IMR-90 (cell line): ENCODE measurements at regions of chr1 and their contacts with region 1.

Region 1: DNA sequence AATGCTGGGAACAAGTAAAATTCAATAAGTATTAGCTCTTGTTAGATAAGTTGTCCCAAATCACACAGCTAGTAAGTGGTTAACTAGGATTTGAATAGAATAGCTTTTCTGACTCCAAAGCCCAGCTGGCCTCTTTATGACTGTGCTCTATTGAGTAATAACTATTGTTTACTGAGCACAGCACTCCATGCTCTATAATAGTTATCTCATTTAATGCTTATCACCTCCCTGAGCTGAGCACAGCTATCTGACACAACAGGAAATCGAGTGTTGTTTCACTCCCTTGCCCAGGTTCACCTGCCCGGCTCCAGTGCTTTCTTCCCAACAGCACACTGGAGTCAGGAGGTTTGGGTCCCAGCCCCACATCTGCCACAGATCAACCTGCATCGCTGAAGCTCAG is 38.8 kb upstream of the STMN1 start:
- DNase-seq: peak; percentile 55
- ATAC-seq: peak; percentile 69
- H3K4me3 ChIP-seq: no peak overlapping the region
- H3K27ac ChIP-seq: no peak overlapping the region
- H3K4me1 ChIP-seq: no peaks in the 10 kb centered on the region; the same call in 1 of the 2 replicates
- H3K27me3 ChIP-seq: no peaks in the 10 kb centered on the region
- CTCF ChIP-seq: no peak
- POLR2A ChIP-seq: no peak
- RAD21 ChIP-seq: no peak

Region 2: GRCh38 chr1:25890239-25891034 is 54.5 kb before region 1 on chr1:
- CTCF ChIA-PET with region 1: interaction called, 3 read pairs
- POLR2A ChIA-PET with region 1: interaction called, 11 read pairs
- dilution Hi-C with region 1: no loop called
- in situ Hi-C with region 1: no loop called
- intact Hi-C with region 1: no loop called
- DNase-seq: peak; percentile 58
- ATAC-seq: no peak
- H3K4me3 ChIP-seq: no peak overlapping the region
- H3K27ac ChIP-seq: peak overlapping the region; percentile 74
- H3K4me1 ChIP-seq: peaks cover 33% of the 10 kb centered on the region
- H3K27me3 ChIP-seq: no peaks in the 10 kb centered on the region
- CTCF ChIP-seq: no peak
- POLR2A ChIP-seq: no peak
- RAD21 ChIP-seq: no peak

Region 3: DNA sequence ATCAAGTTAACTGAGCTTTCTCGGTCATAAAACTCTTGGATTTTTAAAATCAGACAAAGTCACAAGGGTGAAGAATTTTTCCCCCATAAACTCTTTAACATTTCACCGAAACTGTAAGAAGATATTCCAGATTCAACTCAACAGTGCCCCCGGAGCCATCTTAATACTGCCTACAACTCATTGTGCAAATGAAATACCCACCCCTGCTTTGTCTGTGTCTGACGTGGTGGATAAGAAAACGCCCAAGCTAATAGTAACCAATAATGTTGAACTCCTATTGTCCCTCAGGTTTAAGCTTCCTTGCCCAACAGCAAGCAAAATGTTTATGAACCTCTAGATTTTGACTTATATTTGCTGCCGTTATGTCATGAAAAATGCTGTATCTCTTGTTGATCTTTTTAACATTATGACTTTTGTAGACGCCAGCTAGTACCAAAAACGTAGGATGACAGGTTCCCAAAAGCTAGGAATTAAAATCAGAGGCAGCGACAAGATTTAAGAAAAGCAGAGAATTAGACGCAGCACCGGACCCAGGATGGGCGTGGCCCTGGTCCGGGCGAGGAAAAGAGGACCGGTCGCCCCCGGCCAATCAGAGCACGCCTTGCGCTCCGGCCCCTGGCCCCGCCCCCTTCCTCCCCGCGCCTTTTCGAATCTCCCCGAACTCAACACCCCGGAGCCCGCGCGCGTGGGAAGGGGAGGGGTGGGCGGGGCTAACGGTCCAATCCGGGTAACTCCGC is 39.9 kb before region 1 on chr1:
- CTCF ChIA-PET with region 1: no interaction called
- POLR2A ChIA-PET with region 1: interaction called, 17 read pairs
- dilution Hi-C with region 1: no loop called
- in situ Hi-C with region 1: no loop called
- intact Hi-C with region 1: no loop called
- DNase-seq: peak; percentile 88
- ATAC-seq: peak; percentile 92
- H3K4me3 ChIP-seq: peak overlapping the region; percentile 71
- H3K27ac ChIP-seq: peak overlapping the region; percentile 36
- H3K4me1 ChIP-seq: peaks cover 5% of the 10 kb centered on the region
- H3K27me3 ChIP-seq: no peaks in the 10 kb centered on the region
- CTCF ChIP-seq: no peak
- POLR2A ChIP-seq: no peak
- RAD21 ChIP-seq: 0 out of 2 replicates have a peak, but pooled peaks have one; percentile 6

Region 4: DNA sequence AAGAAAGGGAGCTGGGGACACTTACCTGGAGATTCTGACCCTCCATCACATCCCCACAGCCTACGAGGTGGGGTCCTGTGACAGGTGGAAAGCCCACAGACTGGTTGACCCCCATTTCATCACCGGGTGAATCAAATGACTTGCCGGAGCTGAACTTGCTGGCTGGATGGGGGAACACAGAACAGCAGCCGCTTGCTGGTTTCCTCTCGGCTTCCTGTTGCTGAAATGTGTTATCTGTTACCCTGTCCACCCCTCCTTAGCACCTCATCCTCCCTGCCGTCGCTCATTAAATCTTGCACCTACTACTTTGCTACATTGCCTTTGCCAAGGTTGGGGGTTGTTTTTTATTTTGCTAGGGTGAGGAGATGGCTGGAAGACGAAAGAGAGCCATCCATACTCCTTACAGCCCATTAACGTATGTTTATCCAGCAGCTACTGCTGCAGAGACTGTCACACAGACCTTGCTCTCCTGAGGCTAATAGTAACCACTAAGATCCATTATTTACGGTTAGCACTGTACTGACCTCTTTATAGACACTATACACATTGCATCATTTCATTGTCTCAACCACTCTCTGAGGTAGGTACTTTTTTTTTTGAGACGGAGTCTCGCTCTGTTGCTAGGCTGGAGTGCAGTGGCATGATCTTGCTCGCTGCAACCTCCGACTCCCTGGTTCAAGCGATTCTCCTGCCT is 45.9 kb after region 1 on chr1:
- CTCF ChIA-PET with region 1: no interaction called
- POLR2A ChIA-PET with region 1: no interaction called
- dilution Hi-C with region 1: no loop called
- in situ Hi-C with region 1: no loop called
- intact Hi-C with region 1: loop called (anchors 5 kb)
- DNase-seq: no peak
- ATAC-seq: no peak
- H3K4me3 ChIP-seq: no peak overlapping the region
- H3K27ac ChIP-seq: no peak overlapping the region
- H3K4me1 ChIP-seq: peaks cover 10% of the 10 kb centered on the region
- H3K27me3 ChIP-seq: no peaks in the 10 kb centered on the region
- CTCF ChIP-seq: no peak
- POLR2A ChIP-seq: no peak
- RAD21 ChIP-seq: no peak

Region 5: DNA sequence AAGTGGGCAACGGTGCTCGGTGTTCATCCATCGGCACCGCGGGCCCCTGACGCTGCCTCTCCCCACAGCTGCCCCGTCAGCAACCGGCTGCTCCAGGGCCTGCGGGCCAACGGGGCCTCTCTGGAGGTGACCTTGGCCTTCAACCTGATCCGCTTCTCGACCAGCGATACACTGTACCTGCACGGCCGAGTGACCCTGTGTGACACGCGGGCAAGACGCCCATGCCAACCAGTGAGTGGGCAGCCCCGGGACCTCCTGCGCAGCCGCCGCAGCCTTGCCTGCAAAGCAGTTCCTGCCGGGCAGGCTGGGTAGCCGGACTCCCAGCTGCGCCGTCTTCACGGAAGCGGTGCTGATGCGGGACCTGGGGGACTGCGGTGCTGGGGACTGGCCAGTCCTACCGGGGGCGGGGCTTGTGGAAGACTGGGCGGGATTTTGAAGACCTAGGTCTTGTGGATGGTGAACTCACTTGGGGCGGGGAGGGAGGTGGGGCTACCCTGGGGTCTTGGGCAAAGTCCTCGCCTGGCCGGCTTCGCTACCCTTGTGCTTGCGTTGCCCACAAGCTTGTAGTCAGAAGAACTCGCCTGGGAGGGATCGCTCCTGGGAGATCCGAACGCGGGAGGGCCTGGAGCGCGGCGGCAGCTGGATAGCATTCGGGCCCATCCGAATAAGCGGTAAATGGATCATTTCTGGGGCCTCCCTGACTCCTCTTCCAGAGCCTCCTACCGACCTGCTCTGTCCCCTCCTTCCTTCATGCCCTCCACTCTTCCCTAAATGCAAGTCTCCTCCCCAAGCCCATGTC is 280.2 kb after region 1 on chr1:
- CTCF ChIA-PET with region 1: no interaction called
- POLR2A ChIA-PET with region 1: no interaction called
- dilution Hi-C with region 1: no loop called
- in situ Hi-C with region 1: no loop called
- intact Hi-C with region 1: no loop called
- DNase-seq: no peak
- ATAC-seq: peak; percentile 89
- H3K4me3 ChIP-seq: peak overlapping the region; percentile 36
- H3K27ac ChIP-seq: no peak overlapping the region
- H3K4me1 ChIP-seq: no peaks in the 10 kb centered on the region
- H3K27me3 ChIP-seq: peaks cover 49% of the 10 kb centered on the region
- CTCF ChIP-seq: no peak
- POLR2A ChIP-seq: no peak
- RAD21 ChIP-seq: no peak